AG04450 (cell line): ENCODE measurements at regions of chr2 and their contacts with region 1.

Region 1: DNA sequence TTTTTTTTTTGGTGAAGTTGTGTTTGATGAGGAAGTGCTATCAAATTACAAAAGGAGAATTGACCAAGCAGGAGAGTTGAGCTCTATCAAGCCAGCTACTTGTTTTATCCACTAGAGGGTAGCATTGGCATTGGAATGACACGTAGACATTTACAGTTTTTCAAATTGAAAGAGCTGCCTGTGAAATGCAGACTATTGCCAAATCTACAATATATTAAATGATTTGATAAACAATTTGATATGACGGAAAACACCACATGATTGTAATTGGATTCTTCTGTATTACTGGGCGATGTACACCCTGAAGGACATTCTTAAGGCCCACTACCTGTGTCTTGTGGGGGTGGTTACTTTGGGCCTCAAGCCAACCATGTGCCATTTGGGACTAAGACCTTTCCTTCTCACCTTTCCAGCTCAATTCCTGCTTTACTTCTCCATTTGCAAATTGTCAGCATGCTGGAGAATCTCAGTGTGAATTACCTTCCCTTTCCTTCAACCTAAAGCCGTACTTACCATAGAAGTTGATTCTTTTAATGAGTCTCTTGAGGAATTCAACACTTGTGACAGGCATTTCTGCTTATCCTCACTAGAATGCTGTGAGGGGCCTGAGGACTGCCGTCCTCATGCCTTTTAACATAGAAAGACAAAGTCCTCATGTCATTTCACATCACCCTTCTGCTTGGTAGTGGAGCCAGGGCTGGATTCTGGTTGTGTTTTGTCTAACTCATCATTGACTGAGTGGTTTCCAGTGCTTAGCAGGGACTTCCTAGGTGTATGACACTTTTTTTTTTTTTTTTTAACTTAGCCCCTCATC is 134.8 kb upstream of the THUMPD2 start:
- DNase-seq: peak; percentile 63
- H3K4me3 ChIP-seq: no peak overlapping the region
- H3K27ac ChIP-seq: peak overlapping the region; percentile 22
- H3K27me3 ChIP-seq: no peaks in the 10 kb centered on the region
- CTCF ChIP-seq: peak; percentile 73

Region 2: GRCh38 chr2:39837856-39838453 is 75.9 kb before region 1 on chr2:
- CTCF ChIA-PET with region 1: interaction called, 16 read pairs
- POLR2A ChIA-PET with region 1: no interaction called
- DNase-seq: peak; percentile 11
- H3K4me3 ChIP-seq: no peak overlapping the region
- H3K27ac ChIP-seq: no peak overlapping the region
- H3K27me3 ChIP-seq: no peaks in the 10 kb centered on the region
- CTCF ChIP-seq: peak; percentile 95

Region 3: GRCh38 chr2:40127890-40128557 is 214.2 kb after region 1 on chr2:
- CTCF ChIA-PET with region 1: interaction called, 15 read pairs
- POLR2A ChIA-PET with region 1: interaction called, 5 read pairs
- DNase-seq: peak; percentile 89
- H3K4me3 ChIP-seq: no peak overlapping the region
- H3K27ac ChIP-seq: peak overlapping the region; percentile 93
- H3K27me3 ChIP-seq: no peaks in the 10 kb centered on the region
- CTCF ChIP-seq: no peak

Region 4: DNA sequence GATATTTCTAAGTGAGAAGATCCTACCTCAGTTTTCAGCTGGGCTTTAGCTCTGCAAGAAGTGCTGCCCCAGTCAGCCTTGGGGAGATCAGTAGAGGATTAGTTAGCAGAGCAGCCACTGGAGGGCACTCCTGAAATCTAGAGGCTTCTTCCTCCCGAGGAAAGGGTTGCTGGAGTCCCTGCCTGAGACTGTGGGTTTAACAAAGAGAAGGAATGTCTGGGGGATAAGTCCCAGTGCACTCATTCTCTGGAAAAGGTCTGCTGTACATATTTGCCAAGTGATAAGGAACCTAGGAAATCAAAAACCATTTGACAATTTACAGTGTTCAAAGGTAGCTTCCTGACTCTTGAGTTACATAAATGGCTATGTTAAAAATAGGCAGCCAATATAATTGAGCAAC is 330.8 kb after region 1 on chr2:
- CTCF ChIA-PET with region 1: interaction called, 32 read pairs
- POLR2A ChIA-PET with region 1: no interaction called
- DNase-seq: no peak
- H3K4me3 ChIP-seq: no peak overlapping the region
- H3K27ac ChIP-seq: no peak overlapping the region
- H3K27me3 ChIP-seq: no peaks in the 10 kb centered on the region
- CTCF ChIP-seq: peak; percentile 71

Region 5: GRCh38 chr2:41400088-41400665 is 1486.3 kb after region 1 on chr2:
- CTCF ChIA-PET with region 1: interaction called, 13 read pairs
- POLR2A ChIA-PET with region 1: no interaction called
- DNase-seq: no peak
- H3K4me3 ChIP-seq: no peak overlapping the region
- H3K27ac ChIP-seq: no peak overlapping the region
- H3K27me3 ChIP-seq: no peaks in the 10 kb centered on the region
- CTCF ChIP-seq: peak; percentile 38; the same call in 1 of the 2 replicates